ENCODE measurements at regions of chr9 and their contacts with region 1.

Region 1: GRCh38 chr9:32579706-32580331 is 6.9 kb upstream of the NDUFB6 start:
- DNase-seq: peak; percentile 84
- H3K4me3 Mint-ChIP-seq: no peak overlapping the region
- H3K27ac Mint-ChIP-seq: no peak overlapping the region
- H3K4me1 Mint-ChIP-seq: no peaks in the 10 kb centered on the region
- H3K27me3 Mint-ChIP-seq: peaks cover 14% of the 10 kb centered on the region

Region 2: GRCh38 chr9:32384364-32385151 is 195.3 kb before region 1 on chr9 and contains the start of gene ACO1:
- CTCF ChIA-PET with region 1: interaction called, 502 read pairs
- POLR2A ChIA-PET with region 1: no interaction called
- intact Hi-C with region 1: loop called (anchors 1 kb)
- DNase-seq: peak; percentile 87
- H3K4me3 Mint-ChIP-seq: peak within 1 kb of the TSS; percentile 79
- H3K27ac Mint-ChIP-seq: no peak within 1 kb of the TSS
- H3K4me1 Mint-ChIP-seq: peaks cover 15% of the 10 kb centered on the region
- H3K27me3 Mint-ChIP-seq: peaks cover 5% of the 10 kb centered on the region
- total RNA-seq, gene ACO1: 13.1 to 13.7 TPM

Region 3: DNA sequence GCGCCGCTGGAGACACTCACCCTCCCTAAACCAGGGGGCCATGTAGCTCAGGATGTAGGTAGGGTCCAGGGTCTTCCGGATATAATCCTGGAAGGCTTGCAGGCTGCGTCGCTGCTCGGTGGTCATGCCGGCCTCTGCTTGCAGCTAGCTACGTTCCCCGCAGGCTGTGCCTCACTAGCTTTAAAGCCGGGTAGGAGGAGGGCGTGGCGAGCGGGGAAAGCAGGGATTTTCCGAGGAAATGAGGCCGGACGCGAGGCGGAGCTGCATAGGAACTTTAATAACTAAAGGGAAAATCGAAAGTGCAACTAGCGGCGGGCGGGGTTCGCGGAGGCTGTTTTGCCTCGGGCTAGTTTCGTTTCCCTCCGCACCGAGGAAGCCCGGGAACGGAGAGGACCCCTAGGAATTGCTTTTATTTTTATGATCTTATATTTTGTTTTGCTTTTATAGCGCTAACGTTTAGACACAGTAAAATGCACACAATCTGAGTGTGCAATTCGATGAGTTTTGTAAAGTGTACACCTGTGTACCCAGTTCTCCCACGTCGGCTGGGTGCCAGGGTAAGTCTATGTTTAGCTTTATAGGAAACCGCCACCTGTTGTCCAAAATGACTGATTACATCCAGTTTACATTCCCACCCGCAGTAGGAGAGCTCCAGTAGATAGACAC is 53.6 kb before region 1 on chr9 and contains the start of gene RIGI:
- CTCF ChIA-PET with region 1: interaction called, 29 read pairs
- POLR2A ChIA-PET with region 1: no interaction called
- intact Hi-C with region 1: no loop called
- DNase-seq: peak; percentile 89
- H3K4me3 Mint-ChIP-seq: peak within 1 kb of the TSS; percentile 82
- H3K27ac Mint-ChIP-seq: peak within 1 kb of the TSS; percentile 81
- H3K4me1 Mint-ChIP-seq: peaks cover 41% of the 10 kb centered on the region
- H3K27me3 Mint-ChIP-seq: no peaks in the 10 kb centered on the region
- total RNA-seq, gene RIGI: 10.6 to 11.7 TPM

Region 4: DNA sequence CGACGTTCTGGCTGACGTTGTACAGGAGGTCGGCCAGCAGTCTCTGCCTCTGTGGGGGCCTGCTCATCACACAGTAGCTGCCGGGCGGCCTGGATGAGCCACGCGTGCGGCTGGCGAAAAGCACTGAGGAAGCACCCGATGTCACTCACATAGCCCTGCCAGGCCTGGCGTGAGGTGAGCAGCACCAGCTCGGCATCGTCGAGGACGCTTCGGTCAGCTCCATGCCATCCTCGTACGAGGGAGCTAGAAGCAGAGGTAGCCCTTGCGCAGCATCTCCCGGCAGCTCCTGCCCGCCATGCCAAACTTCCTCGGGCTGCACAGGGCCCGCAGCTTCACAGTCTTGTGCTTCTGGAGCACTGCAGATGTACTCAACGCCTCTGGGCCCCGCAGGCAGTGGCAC is 13.0 kb before region 1 on chr9:
- CTCF ChIA-PET with region 1: interaction called, 22 read pairs
- POLR2A ChIA-PET with region 1: no interaction called
- intact Hi-C with region 1: no loop called
- DNase-seq: no peak
- H3K4me3 Mint-ChIP-seq: no peak overlapping the region
- H3K27ac Mint-ChIP-seq: no peak overlapping the region
- H3K4me1 Mint-ChIP-seq: peaks cover 12% of the 10 kb centered on the region
- H3K27me3 Mint-ChIP-seq: no peaks in the 10 kb centered on the region

Region 5: DNA sequence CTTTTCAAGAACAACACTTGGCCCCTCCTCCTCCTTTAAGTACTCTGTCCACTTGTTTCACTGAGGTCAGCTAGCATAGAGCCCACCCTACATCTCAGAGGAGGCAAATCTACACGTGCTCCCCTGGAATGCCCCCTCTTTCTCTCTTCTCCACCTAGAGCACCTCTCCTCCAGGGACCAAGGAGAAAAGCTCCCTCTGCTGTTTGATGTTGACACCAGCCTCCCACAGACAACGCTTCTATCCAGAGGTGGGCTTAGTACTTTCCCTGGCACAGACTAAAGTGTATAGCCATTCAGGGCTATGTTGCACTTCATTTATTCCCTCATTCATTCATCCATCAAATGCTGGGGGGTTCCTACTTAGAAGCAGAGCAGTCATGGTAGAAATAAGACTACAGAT is 123.8 kb after region 1 on chr9:
- CTCF ChIA-PET with region 1: interaction called, 4 read pairs
- POLR2A ChIA-PET with region 1: no interaction called
- intact Hi-C with region 1: loop called (anchors 10 kb)
- DNase-seq: no peak
- H3K4me3 Mint-ChIP-seq: no peak overlapping the region
- H3K27ac Mint-ChIP-seq: no peak overlapping the region
- H3K4me1 Mint-ChIP-seq: no peaks in the 10 kb centered on the region
- H3K27me3 Mint-ChIP-seq: peaks cover 1% of the 10 kb centered on the region

Region 6: GRCh38 chr9:32748013-32748412 is 168.2 kb after region 1 on chr9:
- CTCF ChIA-PET with region 1: no interaction called
- POLR2A ChIA-PET with region 1: no interaction called
- intact Hi-C with region 1: no loop called
- DNase-seq: no peak
- H3K4me3 Mint-ChIP-seq: no peak overlapping the region
- H3K27ac Mint-ChIP-seq: no peak overlapping the region
- H3K4me1 Mint-ChIP-seq: no peaks in the 10 kb centered on the region
- H3K27me3 Mint-ChIP-seq: no peaks in the 10 kb centered on the region

Region 7: GRCh38 chr9:32968101-32969011 is 388.5 kb after region 1 on chr9:
- CTCF ChIA-PET with region 1: interaction called, 101 read pairs
- POLR2A ChIA-PET with region 1: no interaction called
- intact Hi-C with region 1: loop called (anchors 1 kb)
- DNase-seq: peak; percentile 63
- H3K4me3 Mint-ChIP-seq: no peak overlapping the region
- H3K27ac Mint-ChIP-seq: no peak overlapping the region
- H3K4me1 Mint-ChIP-seq: peaks cover 2% of the 10 kb centered on the region
- H3K27me3 Mint-ChIP-seq: no peaks in the 10 kb centered on the region

Measured in activated CD4-positive, alpha-beta memory T cell treated with anti-CD3 and anti-CD28 coated beads for 36 hours (primary cell).